HCT116 (cell line): ENCODE measurements at regions of chr3 and their contacts with region 1.

Region 1: GRCh38 chr3:112582244-112582874 is 20.5 kb downstream of the SLC35A5 start:
- DNase-seq: peak; percentile 34
- ATAC-seq: peak; percentile 64
- H3K4me3 ChIP-seq: no peak overlapping the region
- H3K27ac ChIP-seq: no peak overlapping the region
- H3K4me1 ChIP-seq: no peaks in the 10 kb centered on the region
- H3K27me3 ChIP-seq: no peaks in the 10 kb centered on the region
- CTCF ChIP-seq: peak; percentile 41 to 71 (median 62); a peak in 5 of 6 replicates
- POLR2A ChIP-seq: no peak
- RAD21 ChIP-seq: peak; percentile 72

Region 2: GRCh38 chr3:112814266-112814665 is 231.9 kb after region 1 on chr3:
- CTCF ChIA-PET with region 1: interaction called, 5 read pairs
- POLR2A ChIA-PET with region 1: no interaction called
- RAD21 ChIA-PET with region 1: interaction called in 1 of 2 experiments, 3 read pairs
- intact Hi-C with region 1: loop called (anchors 5 kb)
- DNase-seq: peak; percentile 21
- ATAC-seq: peak; percentile 72
- H3K4me3 ChIP-seq: no peak overlapping the region
- H3K27ac ChIP-seq: no peak overlapping the region
- H3K4me1 ChIP-seq: no peaks in the 10 kb centered on the region
- H3K27me3 ChIP-seq: 0 out of 2 replicates have a peak, but pooled peaks cover 5% of the 10 kb centered on the region
- CTCF ChIP-seq: peak; percentile 34 to 51 (median 41); a peak in 3 of 6 replicates
- POLR2A ChIP-seq: no peak
- RAD21 ChIP-seq: peak; percentile 65

Region 3: DNA sequence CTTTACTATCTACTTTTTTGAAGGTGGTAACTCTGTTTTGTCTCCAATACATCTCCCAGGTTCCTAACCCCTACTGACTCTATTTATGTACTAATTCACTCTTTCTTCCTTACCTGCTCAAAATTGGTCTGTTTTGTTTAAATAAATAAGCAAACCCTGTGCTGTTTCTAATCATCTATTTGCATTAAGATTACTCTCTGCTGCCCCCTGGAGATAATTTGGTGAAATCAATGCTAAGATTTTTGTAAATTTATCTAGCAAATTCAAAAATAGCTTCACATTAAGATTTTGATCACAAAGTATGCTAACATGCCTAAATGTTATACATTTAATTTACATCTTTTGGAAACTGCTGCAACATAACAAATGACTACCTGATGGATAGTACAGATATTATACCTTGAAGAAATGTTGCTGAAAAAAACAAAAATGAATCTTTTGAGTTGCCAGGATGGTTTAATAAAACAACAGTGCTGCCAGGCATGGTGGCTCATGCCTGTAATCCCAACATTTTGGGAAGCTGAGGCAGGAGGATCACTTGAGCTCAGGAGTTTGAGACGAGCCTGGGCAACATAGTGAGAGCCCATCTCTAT is 397.0 kb after region 1 on chr3:
- CTCF ChIA-PET with region 1: interaction called, 7 read pairs
- POLR2A ChIA-PET with region 1: no interaction called
- RAD21 ChIA-PET with region 1: no interaction called
- intact Hi-C with region 1: loop called (anchors 2 kb)
- DNase-seq: peak; percentile 13
- ATAC-seq: peak; percentile 34; the same call in 1 of the 2 replicates
- H3K4me3 ChIP-seq: no peak overlapping the region
- H3K27ac ChIP-seq: no peak overlapping the region
- H3K4me1 ChIP-seq: no peaks in the 10 kb centered on the region
- H3K27me3 ChIP-seq: no peaks in the 10 kb centered on the region
- CTCF ChIP-seq: peak; percentile 42 to 77 (median 66); a peak in 5 of 6 replicates
- POLR2A ChIP-seq: no peak
- RAD21 ChIP-seq: peak; percentile 69

Region 4: DNA sequence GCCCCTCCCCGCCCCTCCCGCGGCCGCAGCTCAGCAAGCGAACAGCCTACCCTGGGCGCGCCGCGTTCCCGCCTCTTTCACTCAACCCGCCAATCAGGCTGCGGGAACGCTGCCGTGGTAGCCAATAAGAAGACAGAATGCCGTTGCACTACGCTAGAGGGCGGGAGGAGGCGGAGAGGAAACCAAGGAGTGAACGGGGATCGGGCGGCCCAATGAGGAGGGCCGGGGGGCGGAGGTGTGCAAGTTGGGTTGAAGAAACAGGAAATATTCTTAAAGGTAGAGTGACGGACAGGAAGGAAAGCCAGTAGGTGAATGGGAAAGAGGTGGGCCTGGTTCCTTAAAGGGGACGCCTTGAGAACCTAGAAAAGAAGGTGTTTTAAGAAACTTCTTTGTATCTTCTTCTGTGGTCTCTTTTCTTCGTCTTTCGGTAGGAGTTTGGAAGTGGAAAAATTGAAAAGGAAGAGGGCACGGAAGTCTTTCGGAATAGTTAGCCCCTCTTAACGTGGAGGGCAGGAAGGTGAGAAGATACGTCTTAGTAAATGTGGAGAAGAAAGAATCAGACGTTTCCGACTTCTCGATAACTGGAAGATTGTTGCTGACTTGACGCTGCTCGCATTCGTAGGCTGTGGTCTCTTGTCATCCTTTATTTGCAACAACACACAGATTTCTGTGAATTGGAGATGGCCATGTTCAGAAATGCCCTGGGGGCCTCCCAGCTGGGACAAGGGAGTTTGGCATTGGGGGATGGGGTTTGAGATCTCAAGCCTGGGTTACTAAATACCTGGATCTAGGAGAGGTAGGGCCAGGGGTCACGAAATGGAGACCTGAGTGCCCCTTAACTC is 1114.5 kb after region 1 on chr3:
- CTCF ChIA-PET with region 1: no interaction called
- POLR2A ChIA-PET with region 1: no interaction called
- RAD21 ChIA-PET with region 1: no interaction called
- intact Hi-C with region 1: no loop called
- DNase-seq: peak; percentile 97
- ATAC-seq: peak; percentile 90
- H3K4me3 ChIP-seq: peak overlapping the region; percentile 68 to 93
- H3K27ac ChIP-seq: peak overlapping the region; percentile 49
- H3K4me1 ChIP-seq: peaks cover 4 to 17% of the 10 kb centered on the region in 2 experiments; a peak in 3 of 4 replicates
- H3K27me3 ChIP-seq: no peaks in the 10 kb centered on the region
- CTCF ChIP-seq: no peak
- POLR2A ChIP-seq: no peak
- RAD21 ChIP-seq: no peak